ENCODE measurements at regions of chr9 and their contacts with region 1.

Region 1: GRCh38 chr9:89154651-89155336 is 23.8 kb downstream of the SHC3 start:
- DNase-seq: peak; percentile 81
- H3K4me3 Mint-ChIP-seq: no peak overlapping the region
- H3K27ac Mint-ChIP-seq: peak overlapping the region; percentile 32
- H3K4me1 Mint-ChIP-seq: peaks cover 22% of the 10 kb centered on the region
- H3K27me3 Mint-ChIP-seq: no peaks in the 10 kb centered on the region
- CTCF ChIP-seq: no peak

Region 2: DNA sequence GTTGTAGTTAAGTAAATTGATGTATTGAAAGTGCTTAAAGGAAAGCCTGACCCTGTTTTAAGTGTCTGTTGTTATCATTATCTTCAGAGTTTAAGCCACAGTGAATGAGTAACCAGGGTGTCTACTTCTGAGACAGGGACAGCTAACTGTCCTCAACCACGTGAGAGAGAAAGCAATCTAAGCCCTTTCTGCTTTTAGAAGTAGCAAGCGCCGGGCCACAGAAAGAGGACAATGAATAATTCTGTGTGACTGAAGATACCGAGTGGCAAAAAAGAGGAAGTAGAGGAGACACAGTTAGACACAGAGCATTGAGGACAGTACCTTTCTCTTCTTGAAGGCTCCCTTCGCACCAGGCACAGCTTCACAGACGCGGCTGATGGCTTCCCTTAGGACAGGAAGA is 77.3 kb before region 1 on chr9:
- CTCF ChIA-PET with region 1: no interaction called
- POLR2A ChIA-PET with region 1: no interaction called
- intact Hi-C with region 1: no loop called
- DNase-seq: no peak
- H3K4me3 Mint-ChIP-seq: no peak overlapping the region
- H3K27ac Mint-ChIP-seq: no peak overlapping the region
- H3K4me1 Mint-ChIP-seq: no peaks in the 10 kb centered on the region
- H3K27me3 Mint-ChIP-seq: no peaks in the 10 kb centered on the region
- CTCF ChIP-seq: no peak

Region 3: GRCh38 chr9:89179895-89180667 is 25.3 kb after region 1 on chr9:
- CTCF ChIA-PET with region 1: no interaction called
- POLR2A ChIA-PET with region 1: interaction called, 12 read pairs
- intact Hi-C with region 1: loop called (anchors 1 kb)
- DNase-seq: peak; percentile 96
- H3K4me3 Mint-ChIP-seq: peak overlapping the region; percentile 85
- H3K27ac Mint-ChIP-seq: peak overlapping the region; percentile 89
- H3K4me1 Mint-ChIP-seq: peaks cover 21% of the 10 kb centered on the region
- H3K27me3 Mint-ChIP-seq: peaks cover 14% of the 10 kb centered on the region
- CTCF ChIP-seq: no peak

Region 4: DNA sequence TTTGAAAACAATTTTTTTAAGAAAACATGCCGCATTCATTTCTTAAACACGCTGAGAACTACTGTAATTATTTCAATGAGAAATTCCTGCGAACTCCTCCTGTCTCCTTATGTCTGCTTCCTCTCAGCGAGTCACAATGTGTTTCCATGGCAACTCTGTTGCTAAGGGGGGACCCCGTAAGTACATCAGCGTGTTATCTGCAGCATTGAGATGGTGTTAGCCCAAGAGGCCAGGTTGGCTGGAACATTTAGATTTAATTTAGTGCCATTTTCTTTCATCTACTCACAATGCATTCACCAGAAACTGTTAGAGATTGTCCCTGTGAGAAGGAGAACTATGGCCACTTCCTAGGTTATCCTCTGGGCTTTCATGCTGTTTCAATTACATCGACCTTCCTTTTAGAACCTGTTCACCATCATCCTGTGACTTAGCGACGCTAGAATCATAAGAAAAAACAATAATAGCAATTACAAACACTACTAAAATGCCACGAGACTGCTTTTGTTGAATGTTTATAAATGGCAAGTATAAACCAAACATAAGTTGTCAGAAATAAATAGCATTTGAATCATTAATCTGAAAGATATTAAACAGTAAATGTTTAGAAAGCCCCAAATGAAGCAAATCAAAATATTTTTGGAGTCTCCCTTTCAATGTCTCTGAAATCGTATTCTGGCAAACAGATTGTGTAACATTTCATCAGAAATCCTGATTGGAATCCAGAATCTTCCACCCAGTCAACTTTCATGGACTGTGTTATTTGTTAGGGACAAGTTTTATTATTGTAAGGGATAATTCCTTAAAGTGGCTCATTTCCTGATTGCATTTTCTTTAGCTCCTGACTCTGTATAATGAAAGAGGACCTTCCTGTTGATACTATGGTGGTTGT is 63.5 kb after region 1 on chr9:
- CTCF ChIA-PET with region 1: no interaction called
- POLR2A ChIA-PET with region 1: no interaction called
- intact Hi-C with region 1: no loop called
- DNase-seq: no peak
- H3K4me3 Mint-ChIP-seq: no peak overlapping the region
- H3K27ac Mint-ChIP-seq: no peak overlapping the region
- H3K4me1 Mint-ChIP-seq: no peaks in the 10 kb centered on the region
- H3K27me3 Mint-ChIP-seq: no peaks in the 10 kb centered on the region
- CTCF ChIP-seq: no peak

Region 5: DNA sequence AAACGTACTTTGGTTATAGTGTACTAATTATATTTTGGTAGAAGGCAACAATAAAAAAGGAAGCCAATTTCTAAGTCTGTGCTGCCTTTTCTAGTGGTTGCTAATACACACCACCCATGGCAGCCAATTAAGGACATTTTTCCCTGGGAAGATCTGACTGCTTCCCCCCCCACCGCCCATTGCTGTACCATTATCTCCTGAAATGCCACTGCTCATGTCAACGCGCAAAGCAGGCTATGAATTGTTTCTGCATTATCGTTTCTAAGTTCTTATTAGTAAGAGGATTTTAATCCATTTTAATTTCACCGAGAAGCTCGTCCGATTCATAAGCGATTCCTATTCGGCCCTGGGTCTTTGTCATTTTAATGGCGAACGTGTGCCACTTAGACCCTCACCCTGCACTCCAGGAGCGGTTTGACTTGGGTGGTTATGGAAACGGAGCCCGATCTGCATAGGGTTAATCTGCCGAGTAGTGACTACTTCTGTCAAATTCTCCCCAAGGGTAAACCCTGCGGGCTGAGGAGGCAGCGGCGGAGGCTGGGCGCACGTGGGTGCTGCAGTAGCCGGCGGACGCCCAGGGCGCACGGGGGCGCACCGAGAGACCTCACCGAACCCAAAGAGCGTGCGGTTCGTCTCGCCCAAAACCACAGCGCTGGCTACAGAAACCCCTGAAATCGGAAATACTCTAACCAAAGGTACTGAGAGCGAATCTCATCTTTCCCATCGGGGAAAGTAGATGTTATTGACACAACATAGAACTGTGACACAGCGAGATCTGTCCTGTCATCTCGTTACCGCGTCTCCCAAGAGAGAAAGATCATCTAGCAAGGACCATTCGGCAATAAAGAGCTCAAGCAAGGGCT is 79.6 kb after region 1 on chr9:
- CTCF ChIA-PET with region 1: no interaction called
- POLR2A ChIA-PET with region 1: no interaction called
- intact Hi-C with region 1: no loop called
- DNase-seq: no peak
- H3K4me3 Mint-ChIP-seq: no peak overlapping the region
- H3K27ac Mint-ChIP-seq: no peak overlapping the region
- H3K4me1 Mint-ChIP-seq: no peaks in the 10 kb centered on the region
- H3K27me3 Mint-ChIP-seq: peaks cover 38% of the 10 kb centered on the region
- CTCF ChIP-seq: no peak

Measured in MCF 10A (cell line).